ENCODE measurements at regions of chr15 and their contacts with region 1.

Region 1: DNA sequence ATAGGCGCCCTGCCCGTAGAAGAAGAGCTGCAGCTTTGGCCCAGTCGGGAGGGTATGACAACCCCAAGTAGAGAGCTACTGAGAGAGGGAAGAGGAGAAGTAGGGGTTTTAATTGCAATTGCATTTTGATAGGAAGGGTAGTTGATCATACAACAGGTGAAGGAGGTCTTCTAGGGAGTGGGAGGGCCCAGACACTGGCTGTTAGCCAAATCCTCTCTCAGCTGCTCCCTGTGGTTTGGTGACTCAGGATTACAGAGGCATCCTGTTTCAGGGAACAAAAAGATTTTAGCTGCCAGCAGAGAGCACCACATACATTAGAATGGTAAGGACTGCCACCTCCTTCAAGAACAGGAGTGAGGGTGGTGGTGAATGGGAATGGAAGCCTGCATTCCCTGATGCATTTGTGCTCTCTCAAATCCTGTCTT is 408.9 kb upstream of the THBS1 start:
- DNase-seq: peak; percentile 79
- H3K4me3 Mint-ChIP-seq: no peak overlapping the region
- H3K27ac Mint-ChIP-seq: no peak overlapping the region
- H3K4me1 Mint-ChIP-seq: peaks cover 33% of the 10 kb centered on the region
- H3K27me3 Mint-ChIP-seq: no peaks in the 10 kb centered on the region
- CTCF ChIP-seq: no peak

Region 2: GRCh38 chr15:38707802-38708671 is 463.9 kb before region 1 on chr15:
- CTCF ChIA-PET with region 1: no interaction called
- intact Hi-C with region 1: loop called (anchors 2 kb)
- DNase-seq: peak; percentile 43
- H3K4me3 Mint-ChIP-seq: no peak overlapping the region
- H3K27ac Mint-ChIP-seq: no peak overlapping the region
- H3K4me1 Mint-ChIP-seq: no peaks in the 10 kb centered on the region
- H3K27me3 Mint-ChIP-seq: no peaks in the 10 kb centered on the region
- CTCF ChIP-seq: no peak

Region 3: GRCh38 chr15:38817427-38818156 is 354.4 kb before region 1 on chr15:
- CTCF ChIA-PET with region 1: no interaction called
- intact Hi-C with region 1: loop called (anchors 5 kb)
- DNase-seq: peak; percentile 89
- H3K4me3 Mint-ChIP-seq: no peak overlapping the region
- H3K27ac Mint-ChIP-seq: no peak overlapping the region
- H3K4me1 Mint-ChIP-seq: no peaks in the 10 kb centered on the region
- H3K27me3 Mint-ChIP-seq: no peaks in the 10 kb centered on the region
- CTCF ChIP-seq: peak; percentile 69

Region 4: DNA sequence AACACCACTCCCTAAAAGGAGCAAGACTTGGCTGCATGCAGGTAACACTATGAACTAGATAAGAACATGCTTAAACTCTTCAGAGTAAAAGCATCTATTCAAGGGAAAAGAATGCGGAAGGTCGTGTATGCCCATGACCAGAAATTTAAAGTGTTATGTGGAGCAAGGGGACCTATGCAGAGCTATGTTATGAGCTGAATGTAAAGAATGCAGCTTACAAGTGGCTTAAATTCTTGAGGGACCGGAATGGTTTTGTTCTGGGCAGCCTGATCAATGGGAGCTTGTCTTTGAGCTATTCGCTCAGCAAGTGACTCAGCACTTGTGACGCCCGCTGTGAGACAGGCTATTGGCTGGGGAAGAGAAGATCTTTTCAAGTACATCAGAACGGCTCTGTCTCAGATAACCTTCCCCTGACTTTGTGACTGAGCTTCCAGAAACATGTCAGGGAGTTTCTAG is 41.5 kb after region 1 on chr15:
- CTCF ChIA-PET with region 1: interaction called, 5 read pairs
- intact Hi-C with region 1: loop called (anchors 1 kb)
- DNase-seq: peak; percentile 71
- H3K4me3 Mint-ChIP-seq: peak overlapping the region; percentile 39
- H3K27ac Mint-ChIP-seq: peak overlapping the region; percentile 93
- H3K4me1 Mint-ChIP-seq: peaks cover 26% of the 10 kb centered on the region
- H3K27me3 Mint-ChIP-seq: no peaks in the 10 kb centered on the region
- CTCF ChIP-seq: no peak

Region 5: GRCh38 chr15:39273717-39274411 is 101.9 kb after region 1 on chr15:
- CTCF ChIA-PET with region 1: interaction called, 4 read pairs
- intact Hi-C with region 1: loop called (anchors 2 kb)
- DNase-seq: peak; percentile 51
- H3K4me3 Mint-ChIP-seq: no peak overlapping the region
- H3K27ac Mint-ChIP-seq: peak overlapping the region; percentile 24
- H3K4me1 Mint-ChIP-seq: peaks cover 15% of the 10 kb centered on the region
- H3K27me3 Mint-ChIP-seq: no peaks in the 10 kb centered on the region
- CTCF ChIP-seq: no peak

Region 6: DNA sequence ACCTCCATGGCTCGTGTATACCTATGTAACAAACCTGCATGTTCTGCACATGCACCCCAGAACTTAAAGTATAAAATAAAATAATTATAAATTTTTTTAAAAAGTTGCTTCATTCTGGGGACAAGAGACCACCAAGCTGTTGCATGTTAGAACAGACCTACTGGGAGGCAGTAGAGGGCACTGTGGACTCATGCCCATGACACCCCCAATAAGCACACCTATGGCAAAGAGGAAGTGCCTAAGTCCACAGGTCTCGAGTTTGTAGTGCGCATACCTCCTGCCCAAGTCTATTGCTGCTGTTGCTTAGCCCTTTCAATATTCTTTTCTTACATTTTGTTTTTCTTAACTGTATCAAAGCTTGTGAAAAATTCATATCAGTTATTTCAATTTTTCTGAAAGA is 141.0 kb after region 1 on chr15:
- CTCF ChIA-PET with region 1: interaction called, 7 read pairs
- intact Hi-C with region 1: loop called (anchors 2 kb)
- DNase-seq: peak; percentile 39
- H3K4me3 Mint-ChIP-seq: no peak overlapping the region
- H3K27ac Mint-ChIP-seq: no peak overlapping the region
- H3K4me1 Mint-ChIP-seq: no peaks in the 10 kb centered on the region
- H3K27me3 Mint-ChIP-seq: no peaks in the 10 kb centered on the region
- CTCF ChIP-seq: no peak

Measured in Calu3 (cell line).